Endothelial cell of umbilical vein (primary cell): ENCODE measurements at regions of chr12 and their contacts with region 1.

Region 1: DNA sequence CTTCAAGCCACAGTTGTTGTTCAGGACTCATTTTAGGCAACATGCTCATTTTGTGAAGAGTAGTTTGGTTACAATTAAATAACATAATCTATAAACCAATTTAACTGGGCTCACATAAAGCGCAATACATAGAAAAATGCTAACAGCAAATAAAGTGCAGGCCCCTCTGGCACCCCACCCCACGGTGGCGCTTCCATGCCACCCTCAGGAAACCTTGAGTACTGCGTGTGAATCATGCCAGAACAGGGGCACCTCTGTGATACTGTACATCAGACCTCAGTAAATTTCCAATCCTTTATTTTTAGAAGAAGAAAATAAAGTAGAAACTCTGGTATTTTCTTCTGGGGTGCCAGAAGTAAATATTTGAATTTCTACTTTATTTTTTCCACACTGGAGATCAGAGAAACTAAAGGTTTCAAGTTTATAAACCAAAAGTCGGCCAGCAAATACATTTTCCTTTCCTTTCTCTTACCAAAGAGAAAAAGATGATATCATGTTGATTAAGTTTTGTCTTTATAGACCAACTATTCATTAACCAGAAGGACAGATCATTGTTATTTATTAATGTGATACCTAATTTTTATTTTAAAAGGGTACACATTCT is 316.8 kb downstream of the PAWR start:
- DNase-seq: peak; percentile 58
- H3K4me3 ChIP-seq: no peak overlapping the region
- H3K27ac ChIP-seq: no peak overlapping the region
- H3K4me1 ChIP-seq: peaks cover 4% of the 10 kb centered on the region
- H3K27me3 ChIP-seq: no peaks in the 10 kb centered on the region
- CTCF ChIP-seq: peak; percentile 84 to 87
- POLR2A ChIP-seq: no peak

Region 2: DNA sequence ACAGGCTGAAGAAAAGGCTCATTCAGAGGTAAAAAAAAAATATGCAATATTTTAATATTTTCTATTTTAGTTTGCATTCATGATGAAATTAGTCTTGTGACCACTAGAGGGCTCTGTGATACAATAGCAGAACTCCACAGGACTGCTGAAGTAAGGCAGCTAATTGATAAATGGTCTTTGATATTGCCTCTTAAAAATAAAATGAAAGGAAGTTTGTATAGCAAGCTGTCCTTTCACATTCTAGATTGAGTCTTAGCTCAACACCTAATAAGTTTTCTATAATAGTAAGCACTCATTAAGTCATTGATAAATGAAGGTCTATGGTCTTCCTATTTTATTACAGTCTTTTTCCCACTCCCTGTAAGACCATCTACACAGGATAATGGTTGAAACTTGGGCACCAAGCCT is 1227.6 kb before region 1 on chr12:
- CTCF ChIA-PET with region 1: interaction called, 7 read pairs
- POLR2A ChIA-PET with region 1: no interaction called
- dilution Hi-C with region 1: no loop called
- intact Hi-C with region 1: loop called (anchors 1 kb)
- DNase-seq: peak; percentile 59
- H3K4me3 ChIP-seq: no peak overlapping the region
- H3K27ac ChIP-seq: no peak overlapping the region
- H3K4me1 ChIP-seq: no peaks in the 10 kb centered on the region
- H3K27me3 ChIP-seq: no peaks in the 10 kb centered on the region
- CTCF ChIP-seq: peak; percentile 49 to 54
- POLR2A ChIP-seq: no peak

Region 3: GRCh38 chr12:78392918-78393317 is 981.1 kb before region 1 on chr12:
- CTCF ChIA-PET with region 1: interaction called, 9 read pairs
- POLR2A ChIA-PET with region 1: no interaction called
- dilution Hi-C with region 1: no loop called
- intact Hi-C with region 1: loop called (anchors 5 kb)
- DNase-seq: peak; percentile 2
- H3K4me3 ChIP-seq: no peak overlapping the region
- H3K27ac ChIP-seq: no peak overlapping the region
- H3K4me1 ChIP-seq: no peaks in the 10 kb centered on the region
- H3K27me3 ChIP-seq: peaks cover 0 to 8% of the 10 kb centered on the region in 2 experiments
- CTCF ChIP-seq: no peak
- POLR2A ChIP-seq: no peak

Region 4: DNA sequence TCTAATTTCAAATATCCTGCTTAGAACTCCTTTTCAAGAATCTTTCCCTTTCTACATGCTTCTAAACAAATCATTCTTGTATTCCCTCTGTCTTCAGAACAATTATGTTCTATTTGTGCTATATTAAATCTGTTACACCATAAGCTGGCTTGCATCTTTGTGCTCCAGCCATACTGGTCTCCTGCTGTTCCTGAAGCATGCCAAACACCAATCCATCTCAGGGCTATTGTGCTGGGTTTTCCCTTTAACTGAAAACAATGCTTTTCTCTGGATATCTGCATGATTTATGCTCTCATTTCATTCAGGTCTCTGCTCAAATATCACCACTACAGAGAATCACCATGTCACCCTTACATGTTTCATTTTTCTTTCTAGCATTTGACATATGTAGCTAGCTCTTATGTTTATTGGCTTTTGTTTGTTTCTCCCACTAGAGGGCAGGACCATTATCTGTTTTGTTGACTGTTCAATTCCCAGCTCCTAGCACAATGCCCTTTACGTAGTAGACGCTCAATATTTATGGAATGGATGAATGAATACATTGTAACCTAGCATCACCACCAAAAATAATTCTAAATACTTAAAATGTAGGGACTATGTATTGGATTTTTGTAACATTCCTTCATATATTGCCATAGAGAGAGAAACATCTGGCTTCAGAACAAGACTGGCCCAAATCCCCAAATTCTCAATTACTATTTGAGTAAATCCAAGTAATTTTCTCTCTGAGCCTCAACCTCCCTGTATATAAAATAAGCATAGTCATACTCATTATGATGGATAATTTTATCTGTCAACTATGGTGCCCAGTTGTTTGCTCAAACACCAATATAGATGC is 811.4 kb before region 1 on chr12:
- CTCF ChIA-PET with region 1: interaction called, 16 read pairs
- POLR2A ChIA-PET with region 1: no interaction called
- dilution Hi-C with region 1: no loop called
- intact Hi-C with region 1: loop called (anchors 5 kb)
- DNase-seq: peak; percentile 46
- H3K4me3 ChIP-seq: no peak overlapping the region
- H3K27ac ChIP-seq: no peak overlapping the region
- H3K4me1 ChIP-seq: no peaks in the 10 kb centered on the region
- H3K27me3 ChIP-seq: peaks cover 5% of the 10 kb centered on the region in 2 experiments
- CTCF ChIP-seq: peak in 1 of 2 donors; percentile 32
- POLR2A ChIP-seq: no peak

Region 5: GRCh38 chr12:79058331-79058730 is 315.7 kb before region 1 on chr12:
- CTCF ChIA-PET with region 1: no interaction called
- POLR2A ChIA-PET with region 1: no interaction called
- dilution Hi-C with region 1: no loop called
- intact Hi-C with region 1: loop called (anchors 5 kb)
- DNase-seq: peak; percentile 85
- H3K4me3 ChIP-seq: no peak overlapping the region
- H3K27ac ChIP-seq: peak overlapping the region; percentile 85
- H3K4me1 ChIP-seq: peaks cover 61% of the 10 kb centered on the region
- H3K27me3 ChIP-seq: no peaks in the 10 kb centered on the region
- CTCF ChIP-seq: no peak
- POLR2A ChIP-seq: no peak

Region 6: GRCh38 chr12:79344855-79345847 is 28.8 kb before region 1 on chr12:
- CTCF ChIA-PET with region 1: interaction called, 10 read pairs
- POLR2A ChIA-PET with region 1: no interaction called
- dilution Hi-C with region 1: no loop called
- intact Hi-C with region 1: no loop called
- DNase-seq: peak; percentile 54
- H3K4me3 ChIP-seq: no peak overlapping the region
- H3K27ac ChIP-seq: no peak overlapping the region
- H3K4me1 ChIP-seq: no peaks in the 10 kb centered on the region
- H3K27me3 ChIP-seq: peaks cover 0 to 2% of the 10 kb centered on the region in 2 experiments
- CTCF ChIP-seq: peak; percentile 35 to 51
- POLR2A ChIP-seq: no peak

Region 7: GRCh38 chr12:79834712-79835376 is 460.8 kb after region 1 on chr12:
- CTCF ChIA-PET with region 1: no interaction called
- POLR2A ChIA-PET with region 1: no interaction called
- dilution Hi-C with region 1: no loop called
- intact Hi-C with region 1: no loop called
- DNase-seq: no peak
- H3K4me3 ChIP-seq: no peak overlapping the region
- H3K27ac ChIP-seq: no peak overlapping the region
- H3K4me1 ChIP-seq: no peaks in the 10 kb centered on the region
- H3K27me3 ChIP-seq: no peaks in the 10 kb centered on the region
- CTCF ChIP-seq: no peak
- POLR2A ChIP-seq: no peak